GM12878 (cell line): ENCODE measurements at regions of chr7 and their contacts with region 1.

Region 1: GRCh38 chr7:113799896-113800295 is 118.9 kb downstream of the PPP1R3A start:
- DNase-seq: peak; percentile 28
- ATAC-seq: peak; percentile 99
- H3K4me3 ChIP-seq: no peak overlapping the region
- H3K27ac ChIP-seq: no peak overlapping the region
- H3K4me1 ChIP-seq: no peaks in the 10 kb centered on the region
- H3K27me3 ChIP-seq: no peaks in the 10 kb centered on the region
- CTCF ChIP-seq: no peak
- EP300 ChIP-seq: peak; percentile 27 to 77; a peak in 3 of 4 replicates
- POLR2A ChIP-seq: no peak
- RAD21 ChIP-seq: no peak

Region 2: DNA sequence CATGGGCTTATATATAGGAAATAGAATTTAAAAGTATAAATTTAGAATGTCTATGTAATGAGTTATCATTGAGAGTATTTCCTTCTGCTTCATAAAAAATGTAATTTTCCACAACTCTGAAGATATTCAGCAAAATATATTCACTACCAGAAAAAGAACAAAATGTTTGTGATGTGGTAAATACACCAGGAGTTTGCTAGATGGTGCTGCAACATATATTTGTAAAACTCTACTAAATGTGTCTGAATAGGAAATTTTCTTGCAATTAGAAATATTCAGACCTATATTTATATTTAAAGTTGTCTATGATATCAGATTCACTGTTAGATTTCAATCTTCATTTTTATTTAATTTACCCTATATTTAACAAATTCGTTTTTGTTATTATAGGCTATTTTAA is 82.2 kb before region 1 on chr7:
- CTCF ChIA-PET with region 1: no interaction called
- POLR2A ChIA-PET with region 1: no interaction called
- RAD21 ChIA-PET with region 1: no interaction called
- SMC1A ChIA-PET with region 1: no interaction called
- in situ Hi-C with region 1: no loop called
- intact Hi-C with region 1: no loop called
- DNase-seq: no peak
- ATAC-seq: no peak
- H3K4me3 ChIP-seq: no peak overlapping the region
- H3K27ac ChIP-seq: no peak overlapping the region
- H3K4me1 ChIP-seq: no peaks in the 10 kb centered on the region
- H3K27me3 ChIP-seq: no peaks in the 10 kb centered on the region
- CTCF ChIP-seq: no peak
- EP300 ChIP-seq: no peak
- POLR2A ChIP-seq: no peak
- RAD21 ChIP-seq: no peak

Region 3: DNA sequence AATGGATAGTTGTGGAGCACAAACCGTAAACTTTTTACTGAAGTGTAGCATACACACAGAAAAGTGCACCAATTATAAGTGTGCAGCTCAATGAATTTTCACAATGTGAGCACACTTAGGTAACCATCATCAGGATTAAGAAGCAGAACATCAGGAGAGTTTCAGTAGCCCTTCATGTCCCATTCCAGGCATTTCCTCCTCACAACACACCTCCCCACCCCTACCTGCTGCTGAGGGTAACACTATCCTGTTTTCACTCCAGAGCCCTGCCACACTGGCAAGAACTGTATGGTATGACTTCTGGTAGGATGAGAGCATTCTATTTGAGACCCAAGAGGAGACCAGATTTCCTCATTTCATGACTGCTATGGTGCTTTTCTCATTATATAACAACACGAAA is 47.6 kb before region 1 on chr7:
- CTCF ChIA-PET with region 1: no interaction called
- POLR2A ChIA-PET with region 1: no interaction called
- RAD21 ChIA-PET with region 1: no interaction called
- SMC1A ChIA-PET with region 1: no interaction called
- in situ Hi-C with region 1: loop called (anchors 5 kb)
- intact Hi-C with region 1: no loop called
- DNase-seq: no peak
- ATAC-seq: no peak
- H3K4me3 ChIP-seq: no peak overlapping the region
- H3K27ac ChIP-seq: no peak overlapping the region
- H3K4me1 ChIP-seq: no peaks in the 10 kb centered on the region
- H3K27me3 ChIP-seq: no peaks in the 10 kb centered on the region
- CTCF ChIP-seq: no peak
- EP300 ChIP-seq: no peak
- POLR2A ChIP-seq: no peak
- RAD21 ChIP-seq: no peak

Region 4: DNA sequence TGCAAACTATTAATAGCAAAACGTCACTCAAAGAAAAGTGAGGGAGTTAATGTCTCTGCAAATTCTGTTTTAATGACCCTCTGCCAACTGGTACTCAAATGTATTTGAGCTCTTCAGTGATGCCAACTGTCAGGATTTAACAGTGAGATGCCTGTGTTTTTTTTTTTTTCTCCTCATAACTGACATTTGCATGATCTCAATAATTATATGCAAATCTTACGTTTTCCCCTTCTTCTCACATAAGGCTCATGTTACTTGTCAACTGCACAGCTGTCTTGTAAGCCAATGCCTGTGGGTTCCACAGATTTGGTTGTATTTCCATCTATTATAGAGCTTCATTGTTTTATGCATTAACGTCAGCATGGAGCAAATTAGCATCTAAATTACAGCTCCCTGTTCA is 80.7 kb after region 1 on chr7:
- CTCF ChIA-PET with region 1: no interaction called
- POLR2A ChIA-PET with region 1: no interaction called
- RAD21 ChIA-PET with region 1: no interaction called
- SMC1A ChIA-PET with region 1: no interaction called
- in situ Hi-C with region 1: no loop called
- intact Hi-C with region 1: no loop called
- DNase-seq: no peak
- ATAC-seq: no peak
- H3K4me3 ChIP-seq: no peak overlapping the region
- H3K27ac ChIP-seq: no peak overlapping the region
- H3K4me1 ChIP-seq: no peaks in the 10 kb centered on the region
- H3K27me3 ChIP-seq: no peaks in the 10 kb centered on the region
- CTCF ChIP-seq: no peak
- EP300 ChIP-seq: no peak
- POLR2A ChIP-seq: no peak
- RAD21 ChIP-seq: no peak

Region 5: GRCh38 chr7:113918946-113919345 is 119.0 kb after region 1 on chr7 and contains the start of gene PPP1R3A:
- CTCF ChIA-PET with region 1: no interaction called
- POLR2A ChIA-PET with region 1: no interaction called
- RAD21 ChIA-PET with region 1: no interaction called
- SMC1A ChIA-PET with region 1: no interaction called
- in situ Hi-C with region 1: no loop called
- intact Hi-C with region 1: no loop called
- DNase-seq: no peak
- ATAC-seq: peak; percentile 55
- H3K4me3 ChIP-seq: no peak within 1 kb of the TSS
- H3K27ac ChIP-seq: no peak within 1 kb of the TSS
- H3K4me1 ChIP-seq: no peaks in the 10 kb centered on the region
- H3K27me3 ChIP-seq: no peaks in the 10 kb centered on the region; a peak in 1 of 4 replicates
- CTCF ChIP-seq: no peak
- EP300 ChIP-seq: no peak
- POLR2A ChIP-seq: no peak
- RAD21 ChIP-seq: no peak
- polyA plus RNA-seq, gene PPP1R3A: not detected